Posterior vena cava (tissue), 2 donors: ENCODE measurements at regions of chr5 and their contacts with region 1.

Region 1: GRCh38 chr5:66933066-66933465 is 263.5 kb downstream of the CD180 start:
- DNase-seq: no peak

Region 2: GRCh38 chr5:66609615-66610014 is 323.5 kb before region 1 on chr5:
- intact Hi-C with region 1: loop called in 1 of 2 experiments (anchors 5 kb)
- DNase-seq: no peak